ENCODE measurements at regions of chr6 and their contacts with region 1.

Region 1: GRCh38 chr6:40550202-40551101 is 36.7 kb downstream of the LRFN2 start:
- DNase-seq: peak; percentile 59
- ATAC-seq: peak; percentile 82
- H3K4me3 ChIP-seq: no peak overlapping the region
- H3K27ac ChIP-seq: no peak overlapping the region
- H3K4me1 ChIP-seq: no peaks in the 10 kb centered on the region
- H3K27me3 ChIP-seq: no peaks in the 10 kb centered on the region; the same call in 1 of the 2 replicates
- CTCF ChIP-seq: peak; percentile 59
- POLR2A ChIP-seq: no peak
- RAD21 ChIP-seq: peak; percentile 47; the same call in 1 of the 2 replicates

Region 2: DNA sequence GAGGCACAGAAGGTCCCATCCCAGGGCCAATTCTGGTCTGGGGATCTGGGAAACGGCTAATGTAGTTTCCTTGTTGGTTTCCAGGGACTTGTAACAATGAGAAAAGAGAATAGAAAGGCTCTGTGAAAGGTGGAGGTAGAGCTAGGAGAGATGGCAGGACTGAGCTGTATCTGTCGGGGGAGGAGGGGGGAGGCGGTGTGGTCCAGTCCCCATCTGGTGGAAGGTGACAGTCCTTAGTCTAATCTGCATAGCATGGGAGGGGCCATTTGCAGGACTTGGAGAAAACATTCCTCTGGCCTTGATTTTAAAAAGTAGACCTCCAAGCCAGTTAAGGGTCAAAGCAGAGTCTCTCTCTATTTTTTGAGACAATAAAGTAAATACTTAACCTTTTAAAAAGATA is 1698.2 kb before region 1 on chr6:
- CTCF ChIA-PET with region 1: no interaction called
- POLR2A ChIA-PET with region 1: no interaction called
- dilution Hi-C with region 1: no loop called
- in situ Hi-C with region 1: no loop called
- intact Hi-C with region 1: no loop called
- DNase-seq: no peak
- ATAC-seq: no peak
- H3K4me3 ChIP-seq: no peak overlapping the region
- H3K27ac ChIP-seq: no peak overlapping the region
- H3K4me1 ChIP-seq: no peaks in the 10 kb centered on the region
- H3K27me3 ChIP-seq: peaks cover 1% of the 10 kb centered on the region
- CTCF ChIP-seq: no peak
- POLR2A ChIP-seq: no peak
- RAD21 ChIP-seq: no peak

Region 3: DNA sequence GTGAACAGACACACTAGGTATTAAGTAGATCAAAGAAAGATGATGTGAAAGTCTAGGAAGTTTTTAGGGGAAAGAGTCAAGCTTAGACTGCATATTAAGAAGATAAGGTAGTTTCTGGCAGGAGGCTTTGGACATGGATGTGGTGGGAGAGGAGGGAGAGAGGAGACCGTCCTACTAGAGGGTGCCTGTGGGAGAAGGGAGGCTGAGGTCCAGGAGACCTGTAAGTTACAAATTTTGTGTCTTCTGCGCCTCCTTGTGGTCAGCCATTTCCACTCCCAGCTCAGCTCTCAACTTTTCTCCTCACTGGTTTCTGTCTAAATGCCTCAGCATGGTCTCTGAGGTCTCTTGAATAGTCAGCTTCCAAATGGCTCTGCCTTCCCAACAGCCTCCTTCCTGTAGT is 295.1 kb after region 1 on chr6:
- CTCF ChIA-PET with region 1: no interaction called
- POLR2A ChIA-PET with region 1: no interaction called
- dilution Hi-C with region 1: no loop called
- in situ Hi-C with region 1: no loop called
- intact Hi-C with region 1: loop called (anchors 10 kb)
- DNase-seq: peak; percentile 37
- ATAC-seq: peak; percentile 42; the same call in 1 of the 2 replicates
- H3K4me3 ChIP-seq: no peak overlapping the region
- H3K27ac ChIP-seq: no peak overlapping the region
- H3K4me1 ChIP-seq: no peaks in the 10 kb centered on the region
- H3K27me3 ChIP-seq: peaks cover 10% of the 10 kb centered on the region; the same call in 1 of the 2 replicates
- CTCF ChIP-seq: peak; percentile 53
- POLR2A ChIP-seq: no peak
- RAD21 ChIP-seq: peak; percentile 51

Region 4: GRCh38 chr6:41066867-41067304 is 516.4 kb after region 1 on chr6:
- CTCF ChIA-PET with region 1: no interaction called
- POLR2A ChIA-PET with region 1: no interaction called
- dilution Hi-C with region 1: no loop called
- in situ Hi-C with region 1: no loop called
- intact Hi-C with region 1: loop called (anchors 10 kb)
- DNase-seq: peak; percentile 84
- ATAC-seq: peak; percentile 40; the same call in 1 of the 2 replicates
- H3K4me3 ChIP-seq: no peak overlapping the region
- H3K27ac ChIP-seq: no peak overlapping the region
- H3K4me1 ChIP-seq: no peaks in the 10 kb centered on the region
- H3K27me3 ChIP-seq: no peaks in the 10 kb centered on the region
- CTCF ChIP-seq: peak; percentile 79
- POLR2A ChIP-seq: no peak
- RAD21 ChIP-seq: peak; percentile 78

Measured in IMR-90 (cell line).